ENCODE measurements at regions of chr6 and their contacts with region 1.

Region 1: DNA sequence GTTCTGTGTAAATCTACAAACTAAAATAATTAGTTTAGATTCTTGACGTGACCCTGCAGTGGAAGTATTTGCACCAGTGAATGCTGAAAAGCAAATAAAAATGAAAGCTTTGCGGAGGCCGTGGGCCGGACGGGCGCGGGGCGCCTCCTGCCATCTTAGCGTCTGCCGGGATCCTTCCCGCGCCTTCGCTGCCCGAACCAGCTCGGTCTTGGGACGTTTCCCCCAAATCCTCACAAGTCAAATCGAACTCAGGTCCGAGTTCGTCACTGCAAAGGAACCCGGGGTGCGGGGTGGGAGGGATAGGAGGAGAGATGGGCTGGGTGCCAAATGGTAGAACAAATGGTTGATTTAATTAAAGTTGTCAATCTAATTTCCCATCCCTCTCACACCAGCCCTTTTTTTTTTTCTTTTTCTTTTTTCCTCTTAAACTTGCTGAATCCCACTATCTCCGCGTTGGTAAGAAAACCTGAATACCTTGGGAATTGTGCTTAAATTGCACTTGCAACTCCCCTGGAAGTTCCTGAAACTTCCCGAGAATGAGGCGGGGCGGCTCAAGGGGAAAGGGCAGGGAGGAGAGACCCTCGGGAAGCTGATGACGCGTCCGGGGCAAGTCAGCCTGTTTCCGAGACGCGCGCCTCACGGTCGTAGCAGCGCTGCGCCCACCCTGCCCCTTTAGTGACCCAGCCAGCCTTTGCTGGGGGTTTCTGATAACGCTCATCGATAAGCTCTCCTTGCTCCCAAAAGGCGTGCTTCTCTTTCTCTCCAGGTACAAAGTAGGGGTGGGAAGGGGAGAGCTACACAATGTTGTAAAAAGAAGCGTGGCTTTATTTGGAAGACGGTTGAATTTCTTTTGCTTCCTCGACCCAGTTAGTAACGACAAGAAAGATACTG is 1.8 kb downstream of the GJA1 start:
- DNase-seq: peak; percentile 51 to 72
- ATAC-seq: peak; percentile 19 to 72 (median 44)
- H3K4me3 ChIP-seq: peak overlapping the region; percentile 69
- H3K27ac ChIP-seq: peak overlapping the region; percentile 39
- H3K4me1 ChIP-seq: no peaks in the 10 kb centered on the region
- H3K27me3 ChIP-seq: peaks cover 2 to 36% (median 5%) of the 10 kb centered on the region in 3 donors
- CTCF ChIP-seq: no peak

Region 2: DNA sequence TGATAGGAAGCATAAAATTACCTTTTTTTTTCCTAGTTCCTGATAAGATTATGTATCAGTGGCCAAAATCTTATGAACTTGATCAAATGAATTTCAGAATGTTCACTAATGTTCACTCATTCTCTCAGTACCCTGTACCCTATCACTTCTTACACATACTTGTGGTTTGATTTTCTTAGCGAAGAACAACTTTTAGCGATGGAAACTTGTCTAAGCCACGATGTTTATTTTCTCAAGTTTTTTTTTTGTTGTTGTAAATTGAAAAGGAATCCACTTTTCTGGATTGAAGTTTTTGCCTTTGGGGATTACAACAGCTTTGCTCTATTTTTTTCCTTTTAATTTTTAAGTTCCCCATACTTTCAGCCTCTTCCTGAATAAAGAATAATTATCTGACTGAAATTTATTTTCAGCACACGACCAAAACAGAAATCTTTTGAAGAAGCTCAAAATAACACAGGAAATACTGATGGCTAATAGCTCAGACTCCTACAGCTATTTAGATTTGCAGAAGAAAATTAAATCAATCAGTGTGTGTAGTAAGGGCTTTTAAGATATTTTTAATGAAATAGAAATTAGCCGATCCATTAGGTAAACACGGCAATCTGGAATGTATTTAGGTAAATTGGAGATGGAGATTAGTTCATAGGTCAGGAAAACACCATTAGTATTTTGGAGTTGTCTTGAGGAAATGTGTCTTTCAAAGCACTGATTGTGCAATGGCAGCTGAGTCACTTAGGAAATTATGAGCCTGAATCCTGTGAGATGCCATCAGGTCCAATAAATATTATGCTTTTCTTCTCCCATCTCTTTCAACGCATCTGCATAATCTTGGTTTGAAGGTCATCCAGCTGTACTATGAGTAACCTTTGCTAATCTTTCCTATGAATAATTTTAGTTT is 215.8 kb after region 1 on chr6:
- intact Hi-C with region 1: loop called in 1 of 2 experiments (anchors 5 kb)
- DNase-seq: no peak
- ATAC-seq: peak in 1 of 4 donors; percentile 68
- H3K4me3 ChIP-seq: no peak overlapping the region
- H3K27ac ChIP-seq: peak overlapping the region; percentile 32
- H3K4me1 ChIP-seq: no peaks in the 10 kb centered on the region
- H3K27me3 ChIP-seq: no peaks in the 10 kb centered on the region
- CTCF ChIP-seq: no peak

Region 3: GRCh38 chr6:121771937-121772720 is 334.9 kb after region 1 on chr6:
- intact Hi-C with region 1: loop called in 1 of 2 experiments (anchors 5 kb)
- DNase-seq: no peak
- ATAC-seq: no peak
- H3K4me3 ChIP-seq: no peak overlapping the region
- H3K27ac ChIP-seq: no peak overlapping the region
- H3K4me1 ChIP-seq: no peaks in the 10 kb centered on the region
- H3K27me3 ChIP-seq: no peaks in the 10 kb centered on the region
- CTCF ChIP-seq: no peak